HCT116 (cell line): ENCODE measurements at regions of chr1 and their contacts with region 1.

Region 1: DNA sequence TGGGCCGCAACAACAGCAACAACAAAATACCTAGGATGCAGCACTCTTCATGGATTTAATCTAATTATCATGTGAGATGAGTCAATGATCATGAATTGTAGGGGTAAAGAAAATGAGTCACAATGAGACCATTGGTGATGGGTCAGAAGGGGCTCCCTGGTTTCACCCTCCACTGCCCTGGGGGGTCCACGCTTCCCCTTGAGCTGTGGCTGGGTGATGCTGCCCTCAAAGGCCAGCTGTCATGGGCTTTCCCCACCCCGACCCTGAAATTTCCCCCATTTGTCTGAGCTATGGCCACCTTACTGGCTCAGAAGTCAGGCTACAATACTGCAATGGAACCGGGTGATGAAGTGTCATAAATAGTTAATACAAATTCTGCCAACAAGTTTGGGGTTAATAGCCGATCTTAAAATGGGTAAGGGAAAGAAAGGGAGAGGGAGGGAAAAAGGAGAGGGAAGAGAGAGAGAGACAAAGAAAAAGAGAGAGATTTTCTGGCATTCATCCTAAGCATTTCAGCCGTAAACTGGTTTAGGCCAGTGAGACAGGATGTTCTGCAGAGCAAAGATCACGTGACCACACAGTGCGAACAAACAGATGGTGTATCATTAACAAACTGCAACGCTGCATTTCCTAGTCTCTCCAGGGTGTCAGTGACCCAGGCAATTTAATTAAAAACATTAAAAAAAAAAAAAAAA is 143.4 kb upstream of the ERRFI1 start:
- DNase-seq: no peak
- ATAC-seq: peak; percentile 26; the same call in 1 of the 2 replicates
- H3K4me3 ChIP-seq: no peak overlapping the region
- H3K27ac ChIP-seq: peak overlapping the region; percentile 96
- H3K4me1 ChIP-seq: peaks cover 71 to 94% of the 10 kb centered on the region in 2 experiments
- H3K27me3 ChIP-seq: no peaks in the 10 kb centered on the region
- CTCF ChIP-seq: no peak
- POLR2A ChIP-seq: peak; percentile 26
- RAD21 ChIP-seq: no peak

Region 2: DNA sequence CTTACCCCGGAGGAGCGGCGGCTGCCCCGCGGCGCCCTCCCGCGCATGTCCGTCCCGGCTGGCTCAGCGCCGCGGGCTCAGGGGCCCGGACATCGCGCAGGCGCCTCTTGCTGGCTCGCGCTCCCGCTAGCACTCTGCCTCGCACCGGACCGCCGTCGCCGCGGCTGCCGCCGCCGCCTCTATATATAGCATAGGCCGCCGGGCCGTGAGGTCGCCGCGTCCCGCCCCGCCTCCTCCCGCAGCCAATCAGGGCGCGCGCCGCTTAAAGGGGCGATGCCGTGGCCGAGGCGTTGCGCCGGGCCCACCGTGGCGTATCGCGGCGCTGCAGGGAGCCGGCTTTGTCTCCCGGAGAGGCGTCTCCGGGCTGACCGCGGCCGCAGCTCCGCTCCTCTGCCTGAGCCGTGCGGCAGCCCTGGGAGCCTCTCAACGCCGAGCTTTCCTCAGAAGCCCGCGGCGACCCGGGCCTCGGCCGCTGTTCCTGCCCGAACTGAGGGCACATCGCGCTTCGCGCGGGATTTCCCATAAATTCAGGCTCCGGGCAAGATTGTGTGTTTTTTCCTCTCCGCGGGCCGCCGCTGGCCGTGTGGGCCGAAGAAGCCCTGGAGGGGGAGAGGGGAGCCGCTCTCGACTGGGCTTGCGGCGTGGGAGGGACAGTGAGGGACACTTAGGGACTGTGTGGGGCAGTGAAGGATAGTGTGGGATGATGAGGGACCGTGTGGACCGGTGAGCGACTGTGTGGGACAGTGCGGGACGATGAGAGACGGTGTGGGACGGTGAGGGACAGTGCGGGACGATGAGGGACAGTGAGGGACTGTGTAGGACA is 143.1 kb before region 1 on chr1 and contains the start of gene ERRFI1:
- CTCF ChIA-PET with region 1: interaction called, 3 read pairs
- POLR2A ChIA-PET with region 1: interaction called, 18 read pairs
- RAD21 ChIA-PET with region 1: interaction called in 1 of 2 experiments, 3 read pairs
- intact Hi-C with region 1: loop called (anchors 2 kb)
- DNase-seq: peak; percentile 83
- ATAC-seq: peak; percentile 74
- H3K4me3 ChIP-seq: peak within 1 kb of the TSS; percentile 88 to 93
- H3K27ac ChIP-seq: peak within 1 kb of the TSS; percentile 99
- H3K4me1 ChIP-seq: peaks cover 64 to 87% of the 10 kb centered on the region in 2 experiments
- H3K27me3 ChIP-seq: no peaks in the 10 kb centered on the region
- CTCF ChIP-seq: no peak
- POLR2A ChIP-seq: peak; percentile 96
- RAD21 ChIP-seq: no peak
- total RNA-seq, gene ERRFI1: 777 TPM

Region 3: DNA sequence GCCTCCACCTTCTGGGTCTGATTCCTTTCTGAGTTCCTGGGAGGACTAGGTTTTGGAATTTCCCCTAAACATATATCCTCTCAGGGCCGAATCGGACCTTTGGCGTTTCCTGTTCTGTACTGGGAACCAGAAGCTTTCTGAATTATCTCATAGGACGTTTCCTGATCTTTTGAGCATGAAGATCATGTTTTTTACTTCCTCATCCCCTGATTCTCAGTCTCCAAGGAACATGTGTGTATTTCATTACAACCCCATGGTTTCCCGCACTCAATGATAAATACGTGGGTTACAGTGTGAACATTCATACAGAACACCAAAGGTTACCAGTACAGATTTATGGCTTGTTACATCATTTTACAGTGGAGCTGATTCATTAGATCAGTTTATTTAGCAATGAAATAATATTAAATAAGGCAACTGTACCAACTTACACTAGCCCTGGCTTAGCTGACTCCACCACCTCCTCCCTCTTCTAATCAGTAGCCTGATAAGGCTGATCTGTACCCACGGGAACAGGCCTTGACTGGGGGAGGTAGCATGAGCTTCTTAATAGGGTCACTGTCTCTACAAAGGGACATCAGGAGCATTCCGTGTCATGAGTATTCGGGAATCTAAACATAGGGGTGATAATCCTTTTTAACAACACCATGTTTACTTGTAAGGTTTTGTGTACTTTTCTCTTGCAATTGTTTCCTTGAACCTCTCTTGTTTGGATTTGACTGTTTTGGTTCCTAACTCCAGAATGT is 85.6 kb before region 1 on chr1:
- CTCF ChIA-PET with region 1: interaction called, 5 read pairs
- POLR2A ChIA-PET with region 1: interaction called, 18 read pairs
- RAD21 ChIA-PET with region 1: no interaction called
- intact Hi-C with region 1: no loop called
- DNase-seq: no peak
- ATAC-seq: no peak
- H3K4me3 ChIP-seq: no peak overlapping the region
- H3K27ac ChIP-seq: peak overlapping the region; percentile 97
- H3K4me1 ChIP-seq: peaks cover 88 to 99% of the 10 kb centered on the region in 2 experiments
- H3K27me3 ChIP-seq: no peaks in the 10 kb centered on the region
- CTCF ChIP-seq: no peak
- POLR2A ChIP-seq: no peak
- RAD21 ChIP-seq: no peak

Region 4: DNA sequence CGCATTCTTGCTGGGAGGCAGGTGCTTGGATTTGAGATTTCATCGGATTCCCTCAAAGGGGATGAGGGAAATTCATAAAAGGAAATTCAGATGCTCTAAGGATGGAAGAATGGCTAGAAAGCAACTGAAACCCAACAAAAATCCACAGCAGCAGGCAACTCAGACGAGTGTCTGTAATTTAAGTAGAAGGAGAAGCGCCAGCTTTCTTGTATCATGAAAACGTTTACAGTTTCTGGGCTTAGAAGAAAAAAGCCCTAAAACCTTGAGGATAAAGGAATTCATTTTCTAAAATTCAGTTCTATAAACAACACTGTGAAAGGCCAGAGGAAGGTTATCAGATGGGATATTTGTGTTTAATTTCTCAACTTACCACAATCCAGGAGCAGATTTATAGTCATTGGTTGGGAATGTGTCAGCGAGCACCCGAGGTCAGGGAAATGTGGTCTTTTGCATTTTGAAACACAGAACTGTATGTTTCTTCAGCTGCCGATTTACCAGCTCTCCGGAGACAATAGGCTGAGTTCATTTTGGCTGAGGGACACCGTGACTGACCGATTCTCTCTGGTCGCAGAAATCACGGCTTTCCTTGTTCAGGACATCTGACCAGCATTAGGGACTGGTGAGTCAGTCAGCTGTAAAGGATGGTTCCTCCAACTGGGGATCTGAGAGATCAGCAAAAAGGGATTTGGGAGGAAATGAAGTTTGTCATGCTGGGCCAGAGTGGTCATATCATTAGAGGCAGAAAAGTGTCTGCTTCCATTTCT is 31.8 kb before region 1 on chr1:
- CTCF ChIA-PET with region 1: no interaction called
- POLR2A ChIA-PET with region 1: interaction called, 48 read pairs
- RAD21 ChIA-PET with region 1: interaction called, 3 read pairs
- intact Hi-C with region 1: no loop called
- DNase-seq: peak; percentile 58
- ATAC-seq: peak; percentile 51
- H3K4me3 ChIP-seq: peak overlapping the region; percentile 10 to 40
- H3K27ac ChIP-seq: peak overlapping the region; percentile 97
- H3K4me1 ChIP-seq: peaks cover 78 to 85% of the 10 kb centered on the region in 2 experiments
- H3K27me3 ChIP-seq: no peaks in the 10 kb centered on the region
- CTCF ChIP-seq: no peak
- POLR2A ChIP-seq: no peak
- RAD21 ChIP-seq: peak; percentile 17; the same call in 1 of the 2 replicates

Region 5: GRCh38 chr1:8189931-8190483 is 20.5 kb after region 1 on chr1:
- CTCF ChIA-PET with region 1: no interaction called
- POLR2A ChIA-PET with region 1: interaction called, 93 read pairs
- RAD21 ChIA-PET with region 1: no interaction called
- intact Hi-C with region 1: no loop called
- DNase-seq: peak; percentile 91
- ATAC-seq: peak; percentile 74
- H3K4me3 ChIP-seq: no peak overlapping the region
- H3K27ac ChIP-seq: peak overlapping the region; percentile 91
- H3K4me1 ChIP-seq: peaks cover 78 to 87% of the 10 kb centered on the region in 2 experiments
- H3K27me3 ChIP-seq: no peaks in the 10 kb centered on the region
- CTCF ChIP-seq: no peak
- POLR2A ChIP-seq: no peak
- RAD21 ChIP-seq: no peak

Region 6: GRCh38 chr1:8590526-8591351 is 421.2 kb after region 1 on chr1:
- CTCF ChIA-PET with region 1: no interaction called
- POLR2A ChIA-PET with region 1: no interaction called
- RAD21 ChIA-PET with region 1: no interaction called
- intact Hi-C with region 1: no loop called
- DNase-seq: no peak
- ATAC-seq: no peak
- H3K4me3 ChIP-seq: no peak overlapping the region
- H3K27ac ChIP-seq: no peak overlapping the region
- H3K4me1 ChIP-seq: no peaks in the 10 kb centered on the region
- H3K27me3 ChIP-seq: no peaks in the 10 kb centered on the region
- CTCF ChIP-seq: no peak
- POLR2A ChIP-seq: no peak
- RAD21 ChIP-seq: no peak